B cell (primary cell): ENCODE measurements at regions of chr7 and their contacts with region 1.

Region 1: GRCh38 chr7:50206453-50207250 is 97.9 kb upstream of the IKZF1 start:
- DNase-seq: no peak
- ATAC-seq: no peak
- H3K4me3 ChIP-seq: no peak overlapping the region
- H3K4me3 Mint-ChIP-seq: no peak overlapping the region
- H3K27ac ChIP-seq: no peak overlapping the region
- H3K27ac Mint-ChIP-seq: no peak overlapping the region
- H3K4me1 ChIP-seq: peaks cover 8 to 14% of the 10 kb centered on the region in 2 donors
- H3K4me1 Mint-ChIP-seq: peaks cover 45% of the 10 kb centered on the region
- H3K27me3 ChIP-seq: no peaks in the 10 kb centered on the region
- H3K27me3 Mint-ChIP-seq: no peaks in the 10 kb centered on the region
- CTCF ChIP-seq: no peak

Region 2: DNA sequence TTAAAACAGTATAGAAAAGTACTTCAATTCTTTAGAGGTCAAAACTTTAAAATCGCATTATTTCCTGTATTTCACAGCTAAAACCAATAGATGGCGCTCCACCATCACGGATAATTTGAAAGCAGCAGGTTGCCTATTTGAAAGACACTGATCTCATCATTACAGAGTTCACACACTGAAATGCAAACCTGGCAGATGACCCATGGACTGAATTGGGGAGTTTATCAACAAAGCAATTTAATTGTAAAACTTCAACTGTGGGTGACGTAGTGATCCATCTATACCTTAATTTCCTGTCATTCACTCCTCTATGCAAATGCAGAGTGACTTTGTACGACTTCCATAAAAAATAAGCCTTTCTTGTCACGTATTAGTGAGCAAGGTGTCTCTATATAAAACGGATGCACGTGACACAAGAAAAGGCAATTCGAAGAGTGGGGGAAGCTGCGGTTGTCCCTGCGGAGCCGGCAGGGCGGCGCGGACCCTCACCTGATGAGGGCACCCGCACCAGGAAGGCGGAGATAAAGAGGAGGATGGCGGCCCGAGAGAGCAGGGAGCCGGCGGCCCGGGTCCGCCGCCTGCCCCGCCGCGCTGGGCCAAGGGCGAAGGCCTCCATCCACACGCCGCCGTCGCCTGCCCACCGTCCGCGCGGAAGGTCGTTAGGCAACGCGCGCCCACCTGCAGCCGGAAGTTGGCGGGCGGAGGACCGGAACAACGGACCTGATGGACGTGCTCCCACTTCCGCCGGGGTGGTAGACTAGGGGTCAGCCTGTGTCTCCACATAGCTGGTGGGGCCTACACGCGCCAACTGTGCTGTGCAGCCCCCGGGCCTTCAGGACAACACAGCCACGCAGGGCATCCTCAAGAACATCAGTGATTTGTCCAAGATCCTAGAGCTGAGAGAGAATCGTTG is 113.8 kb before region 1 on chr7 and contains the start of gene ZPBP:
- CTCF ChIA-PET with region 1: interaction called, 11 read pairs
- POLR2A ChIA-PET with region 1: no interaction called
- intact Hi-C with region 1: no loop called
- DNase-seq: peak; percentile 83
- ATAC-seq: peak; percentile 80
- H3K4me3 ChIP-seq: peak within 1 kb of the TSS; percentile 46 to 82 (median 62)
- H3K4me3 Mint-ChIP-seq: peak within 1 kb of the TSS; percentile 94
- H3K27ac ChIP-seq: peak within 1 kb of the TSS; percentile 35 to 43
- H3K27ac Mint-ChIP-seq: peak within 1 kb of the TSS; percentile 72
- H3K4me1 ChIP-seq: peaks cover 4 to 5% of the 10 kb centered on the region in 2 donors
- H3K4me1 Mint-ChIP-seq: peaks cover 5% of the 10 kb centered on the region
- H3K27me3 ChIP-seq: no peaks in the 10 kb centered on the region
- H3K27me3 Mint-ChIP-seq: no peaks in the 10 kb centered on the region
- CTCF ChIP-seq: peak; percentile 97
- total RNA-seq, gene ZPBP: not detected in 2 replicates

Region 3: GRCh38 chr7:50266635-50267386 is 60.2 kb after region 1 on chr7:
- CTCF ChIA-PET with region 1: interaction called, 75 read pairs
- POLR2A ChIA-PET with region 1: interaction called, 3 read pairs
- intact Hi-C with region 1: loop called (anchors 2 kb)
- DNase-seq: peak; percentile 58
- ATAC-seq: peak; percentile 83
- H3K4me3 ChIP-seq: peak overlapping the region in 4 of 5 experiments; percentile 20 to 55 (median 31)
- H3K4me3 Mint-ChIP-seq: peak overlapping the region; percentile 73
- H3K27ac ChIP-seq: peak overlapping the region; percentile 57 to 71
- H3K27ac Mint-ChIP-seq: peak overlapping the region; percentile 95
- H3K4me1 ChIP-seq: peaks cover 94% of the 10 kb centered on the region in 2 donors
- H3K4me1 Mint-ChIP-seq: peaks cover 92% of the 10 kb centered on the region
- H3K27me3 ChIP-seq: no peaks in the 10 kb centered on the region
- H3K27me3 Mint-ChIP-seq: no peaks in the 10 kb centered on the region
- CTCF ChIP-seq: no peak

Region 4: DNA sequence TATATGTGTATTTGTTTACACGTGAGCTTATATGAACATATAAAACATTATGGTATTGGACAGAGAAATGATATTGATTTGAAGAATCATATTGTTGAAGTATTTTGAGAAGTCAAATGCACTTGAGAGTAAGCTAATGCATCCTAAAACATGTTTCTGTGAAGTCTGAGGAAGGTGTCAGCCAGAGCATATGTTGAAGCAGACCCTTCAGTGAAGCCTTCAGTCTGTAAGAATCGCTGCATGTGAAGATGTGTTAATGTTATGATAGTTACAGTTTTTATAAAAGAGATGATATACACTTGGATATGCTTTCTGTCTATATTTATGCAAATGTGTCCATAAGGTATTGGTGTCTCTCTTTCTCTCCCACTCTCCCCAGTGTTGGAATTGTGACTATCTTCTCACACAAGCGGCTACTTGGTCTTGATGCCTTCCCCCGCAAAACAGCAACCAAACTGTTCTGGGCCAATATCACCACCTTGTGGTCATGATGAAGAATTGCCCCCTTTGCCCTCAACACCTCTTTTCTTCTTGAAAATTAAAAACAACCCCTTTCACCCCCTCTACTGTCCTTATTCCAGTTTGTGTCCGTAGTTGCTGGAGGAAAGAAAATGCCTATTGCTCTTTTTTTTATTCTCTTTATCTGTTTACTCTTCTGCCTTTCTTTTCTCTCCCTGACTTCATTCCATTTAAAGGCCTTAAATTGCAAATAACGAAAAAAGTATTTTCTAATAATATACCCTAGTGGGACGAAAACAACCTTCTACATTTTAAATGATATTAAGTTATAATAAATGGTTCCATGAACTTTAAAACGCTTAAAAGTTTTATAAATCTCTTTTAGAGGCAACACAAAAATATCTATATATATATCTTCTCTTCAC is 162.7 kb after region 1 on chr7:
- CTCF ChIA-PET with region 1: interaction called, 241 read pairs
- POLR2A ChIA-PET with region 1: interaction called, 6 read pairs
- intact Hi-C with region 1: loop called (anchors 1 kb)
- DNase-seq: peak; percentile 83
- ATAC-seq: peak; percentile 70
- H3K4me3 ChIP-seq: no peak overlapping the region
- H3K4me3 Mint-ChIP-seq: no peak overlapping the region
- H3K27ac ChIP-seq: peak overlapping the region in 1 of 2 donors; percentile 71
- H3K27ac Mint-ChIP-seq: peak overlapping the region; percentile 74
- H3K4me1 ChIP-seq: peaks cover 35 to 58% of the 10 kb centered on the region in 2 donors
- H3K4me1 Mint-ChIP-seq: peaks cover 91% of the 10 kb centered on the region
- H3K27me3 ChIP-seq: no peaks in the 10 kb centered on the region
- H3K27me3 Mint-ChIP-seq: no peaks in the 10 kb centered on the region
- CTCF ChIP-seq: peak; percentile 92

Region 5: GRCh38 chr7:50418086-50418515 is 211.4 kb after region 1 on chr7:
- CTCF ChIA-PET with region 1: interaction called, 211 read pairs
- POLR2A ChIA-PET with region 1: interaction called, 8 read pairs
- intact Hi-C with region 1: loop called (anchors 1 kb)
- DNase-seq: peak; percentile 82
- ATAC-seq: peak; percentile 78
- H3K4me3 ChIP-seq: no peak overlapping the region
- H3K4me3 Mint-ChIP-seq: no peak overlapping the region
- H3K27ac ChIP-seq: no peak overlapping the region
- H3K27ac Mint-ChIP-seq: no peak overlapping the region
- H3K4me1 ChIP-seq: peaks cover 49 to 51% of the 10 kb centered on the region in 2 donors
- H3K4me1 Mint-ChIP-seq: peaks cover 54% of the 10 kb centered on the region
- H3K27me3 ChIP-seq: no peaks in the 10 kb centered on the region
- H3K27me3 Mint-ChIP-seq: no peaks in the 10 kb centered on the region
- CTCF ChIP-seq: peak; percentile 88

Region 6: DNA sequence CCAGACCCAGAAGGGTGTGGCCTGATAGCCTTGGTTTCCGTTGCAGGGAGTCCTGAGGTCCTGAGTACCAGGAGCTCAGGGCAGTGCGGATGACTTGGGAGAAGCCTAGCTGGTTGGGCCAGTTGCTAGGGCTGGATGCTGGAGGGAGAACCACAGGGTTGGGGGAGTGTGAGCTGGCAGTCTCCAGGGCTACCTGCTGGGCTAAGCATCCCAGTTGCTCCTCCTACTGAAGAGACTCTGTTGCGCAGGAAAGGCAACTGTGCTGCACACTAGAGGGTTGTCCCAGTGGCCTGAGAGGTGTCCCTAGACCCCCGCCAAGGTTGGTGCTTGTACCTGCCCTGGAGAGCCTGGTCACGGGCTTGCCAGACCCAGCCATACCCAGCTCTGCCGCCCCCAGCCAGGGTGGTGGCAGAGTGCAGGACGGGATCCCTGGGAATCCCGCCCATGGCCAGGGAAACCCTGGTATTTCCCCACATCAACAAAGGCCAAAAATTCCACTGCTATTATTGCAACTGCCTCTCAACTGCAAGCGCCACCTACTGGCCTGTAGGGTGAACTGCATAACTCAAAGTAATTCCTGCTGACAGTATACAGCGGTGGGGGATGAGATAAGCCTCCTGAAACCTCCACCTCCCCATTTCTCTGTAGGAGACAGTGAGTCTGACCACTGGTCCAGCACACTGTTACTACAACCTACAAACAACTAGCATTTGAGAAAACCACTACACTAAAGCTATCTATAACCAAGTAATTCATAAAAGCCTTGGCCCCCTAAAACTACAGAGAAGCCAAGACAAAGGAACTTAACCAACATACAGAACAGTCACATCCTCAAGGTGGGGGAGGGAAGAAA is 426.1 kb after region 1 on chr7:
- CTCF ChIA-PET with region 1: interaction called, 36 read pairs
- POLR2A ChIA-PET with region 1: no interaction called
- intact Hi-C with region 1: loop called (anchors 1 kb)
- DNase-seq: peak; percentile 69
- ATAC-seq: peak; percentile 73
- H3K4me3 ChIP-seq: no peak overlapping the region
- H3K4me3 Mint-ChIP-seq: no peak overlapping the region
- H3K27ac ChIP-seq: no peak overlapping the region
- H3K27ac Mint-ChIP-seq: no peak overlapping the region
- H3K4me1 ChIP-seq: peaks cover 0 to 6% of the 10 kb centered on the region in 2 donors
- H3K4me1 Mint-ChIP-seq: peaks cover 12% of the 10 kb centered on the region
- H3K27me3 ChIP-seq: peaks cover 0 to 9% (median 3%) of the 10 kb centered on the region in 4 experiments
- H3K27me3 Mint-ChIP-seq: peaks cover 36% of the 10 kb centered on the region
- CTCF ChIP-seq: peak; percentile 96

Region 7: GRCh38 chr7:51019191-51019844 is 812.7 kb after region 1 on chr7:
- CTCF ChIA-PET with region 1: no interaction called
- POLR2A ChIA-PET with region 1: no interaction called
- intact Hi-C with region 1: no loop called
- DNase-seq: no peak
- ATAC-seq: no peak
- H3K4me3 ChIP-seq: no peak overlapping the region
- H3K4me3 Mint-ChIP-seq: no peak overlapping the region
- H3K27ac ChIP-seq: no peak overlapping the region
- H3K27ac Mint-ChIP-seq: no peak overlapping the region
- H3K4me1 ChIP-seq: no peaks in the 10 kb centered on the region
- H3K4me1 Mint-ChIP-seq: no peaks in the 10 kb centered on the region
- H3K27me3 ChIP-seq: no peaks in the 10 kb centered on the region
- H3K27me3 Mint-ChIP-seq: no peaks in the 10 kb centered on the region
- CTCF ChIP-seq: no peak